ENCODE measurements at regions of chr15 and their contacts with region 1.

Region 1: GRCh38 chr15:101294731-101295606 is at the start of gene SNRPA1:
- DNase-seq: peak; percentile 85 to 95
- H3K4me3 ChIP-seq: peak within 1 kb of the TSS; percentile 93
- H3K27ac ChIP-seq: peak within 1 kb of the TSS; percentile 77
- H3K4me1 ChIP-seq: peaks cover 41% of the 10 kb centered on the region
- H3K27me3 ChIP-seq: no peaks in the 10 kb centered on the region
- CTCF ChIP-seq: no peak
- total RNA-seq, gene SNRPA1: 71.6 and 95.0 TPM in 2 replicates

Region 2: DNA sequence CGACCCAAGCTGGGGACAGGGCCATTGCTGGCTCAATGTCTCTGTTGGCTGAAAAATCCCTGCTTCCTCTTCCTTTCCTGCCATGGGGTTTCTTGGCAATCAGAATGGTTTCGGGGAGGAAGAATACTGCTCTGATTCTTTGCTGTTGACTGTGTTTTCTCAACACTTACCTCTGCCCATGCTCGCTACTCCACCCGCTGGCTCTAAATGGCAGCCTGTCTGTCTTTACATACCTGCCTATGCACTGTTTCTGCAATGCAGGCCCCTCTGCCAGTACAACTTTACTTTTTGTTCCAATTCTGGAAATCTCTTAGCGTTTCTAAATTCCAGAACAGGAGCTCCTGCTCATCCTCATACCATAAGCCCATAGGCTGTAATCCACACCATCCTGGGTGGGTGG is 38.4 kb after region 1 on chr15:
- CTCF ChIA-PET with region 1: no interaction called
- POLR2A ChIA-PET with region 1: no interaction called
- intact Hi-C with region 1: no loop called
- DNase-seq: no peak
- H3K4me3 ChIP-seq: peak overlapping the region; percentile 92; the same call in 1 of the 2 replicates
- H3K27ac ChIP-seq: no peak overlapping the region
- H3K4me1 ChIP-seq: 0 out of 2 replicates have a peak, but pooled peaks cover 6% of the 10 kb centered on the region
- H3K27me3 ChIP-seq: no peaks in the 10 kb centered on the region
- CTCF ChIP-seq: no peak

Region 3: DNA sequence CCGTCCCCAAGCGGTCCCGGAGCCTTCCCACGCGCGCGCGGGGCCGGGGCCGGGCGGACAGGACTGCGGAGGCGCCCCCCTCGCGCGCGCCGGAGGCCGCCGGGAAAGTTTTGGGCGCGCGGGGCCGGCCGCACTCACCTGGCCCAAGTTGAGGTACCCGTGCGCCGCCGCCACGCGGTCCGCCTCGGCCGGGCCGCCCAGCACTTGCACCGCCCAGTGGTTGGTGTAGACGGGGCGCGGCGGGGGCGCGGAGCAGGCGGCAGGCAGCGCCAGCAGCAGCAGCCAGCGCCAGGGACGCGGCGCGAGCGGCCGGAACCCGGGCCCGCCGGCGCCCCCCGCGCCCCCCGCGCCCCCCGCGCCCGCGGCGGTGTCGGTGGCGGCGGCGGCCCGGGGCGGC is 194.3 kb after region 1 on chr15:
- CTCF ChIA-PET with region 1: no interaction called
- POLR2A ChIA-PET with region 1: no interaction called
- intact Hi-C with region 1: loop called (anchors 2 kb)
- DNase-seq: peak in 1 of 2 experiments; percentile 65
- H3K4me3 ChIP-seq: peak overlapping the region; percentile 42; the same call in 1 of the 2 replicates
- H3K27ac ChIP-seq: no peak overlapping the region
- H3K4me1 ChIP-seq: peaks cover 30% of the 10 kb centered on the region
- H3K27me3 ChIP-seq: no peaks in the 10 kb centered on the region
- CTCF ChIP-seq: no peak

Region 4: DNA sequence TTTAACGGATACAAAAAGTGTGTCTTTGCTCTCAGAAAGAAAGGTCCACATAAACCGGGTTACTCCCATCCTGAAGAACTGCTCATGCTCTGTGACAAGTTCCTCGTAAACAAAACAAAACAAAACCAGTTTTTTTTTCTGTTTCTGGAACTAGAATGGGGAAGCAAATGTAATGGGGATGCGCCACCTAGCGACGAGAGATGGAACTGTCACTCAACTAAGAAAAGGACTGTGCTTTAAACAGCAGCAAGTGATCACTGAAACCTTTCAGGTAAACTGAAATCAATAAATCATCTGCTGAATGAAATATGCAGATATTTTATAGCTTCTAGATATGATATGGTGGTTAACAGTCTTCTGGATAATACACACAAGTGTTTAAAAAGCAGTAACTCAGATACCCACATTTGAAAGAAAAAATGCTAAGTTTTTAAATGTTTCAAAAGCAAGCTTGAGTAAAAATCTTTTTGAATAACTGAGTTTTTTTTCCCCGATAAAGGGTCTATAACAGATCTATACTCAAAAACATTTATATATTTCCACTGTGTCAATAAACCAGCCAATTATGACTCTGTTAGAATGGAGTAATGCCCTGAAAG is 346.3 kb after region 1 on chr15:
- CTCF ChIA-PET with region 1: interaction called, 7 read pairs
- POLR2A ChIA-PET with region 1: no interaction called
- intact Hi-C with region 1: loop called (anchors 1 kb)
- DNase-seq: peak; percentile 73 to 74
- H3K4me3 ChIP-seq: no peak overlapping the region
- H3K27ac ChIP-seq: no peak overlapping the region
- H3K4me1 ChIP-seq: peaks cover 30% of the 10 kb centered on the region
- H3K27me3 ChIP-seq: no peaks in the 10 kb centered on the region
- CTCF ChIP-seq: peak; percentile 98

Region 5: DNA sequence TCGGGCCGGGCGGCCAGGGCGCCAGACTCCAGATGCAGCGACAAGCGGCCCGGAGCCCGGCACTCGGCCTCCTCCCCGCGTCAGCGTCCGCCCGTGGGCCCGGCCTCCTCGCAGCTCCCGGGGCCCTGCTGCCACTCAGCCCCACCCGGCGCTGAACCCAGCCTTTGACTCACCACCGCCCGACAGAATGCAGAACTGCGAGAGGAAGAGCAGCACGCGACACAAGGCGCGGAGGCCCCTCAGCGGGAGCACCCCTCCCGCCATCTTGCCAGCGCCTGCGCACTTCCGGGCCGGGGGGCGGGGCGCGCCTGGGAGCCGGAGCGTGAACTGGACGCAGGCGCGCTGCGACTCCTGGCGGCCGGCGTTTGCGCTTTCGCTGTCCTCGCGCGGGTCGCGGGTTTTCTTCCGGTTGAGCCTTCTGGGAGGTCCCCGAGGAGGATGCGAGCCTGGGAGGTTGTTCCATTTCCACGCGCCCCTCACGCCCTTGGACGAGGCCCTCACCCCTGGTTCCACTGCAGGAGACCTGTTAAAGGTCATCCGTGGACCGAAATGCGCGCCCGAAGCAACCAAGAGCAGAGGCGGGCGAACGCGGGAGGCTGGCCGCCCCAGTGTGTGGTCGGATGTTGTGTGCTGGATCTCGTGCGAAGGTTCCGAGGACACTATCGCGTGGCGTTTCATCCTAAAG is 357.3 kb after region 1 on chr15 and contains the start of gene TM2D3:
- CTCF ChIA-PET with region 1: interaction called, 3 read pairs
- POLR2A ChIA-PET with region 1: no interaction called
- intact Hi-C with region 1: loop called (anchors 2 kb)
- DNase-seq: peak; percentile 77 to 92
- H3K4me3 ChIP-seq: peak within 1 kb of the TSS; percentile 94
- H3K27ac ChIP-seq: peak within 1 kb of the TSS; percentile 76
- H3K4me1 ChIP-seq: peaks cover 23% of the 10 kb centered on the region
- H3K27me3 ChIP-seq: no peaks in the 10 kb centered on the region
- CTCF ChIP-seq: peak; percentile 76
- total RNA-seq, gene TM2D3: 18.8 and 21.7 TPM in 2 replicates